ENCODE measurements at regions of chr7 and their contacts with region 1.

Region 1: GRCh38 chr7:131107337-131108211 is 220.1 kb upstream of the MKLN1 start:
- DNase-seq: peak; percentile 82
- H3K4me3 Mint-ChIP-seq: peak overlapping the region; percentile 98
- H3K27ac Mint-ChIP-seq: peak overlapping the region; percentile 97
- H3K4me1 Mint-ChIP-seq: peaks cover 57% of the 10 kb centered on the region
- H3K27me3 Mint-ChIP-seq: peaks cover 2% of the 10 kb centered on the region

Region 2: DNA sequence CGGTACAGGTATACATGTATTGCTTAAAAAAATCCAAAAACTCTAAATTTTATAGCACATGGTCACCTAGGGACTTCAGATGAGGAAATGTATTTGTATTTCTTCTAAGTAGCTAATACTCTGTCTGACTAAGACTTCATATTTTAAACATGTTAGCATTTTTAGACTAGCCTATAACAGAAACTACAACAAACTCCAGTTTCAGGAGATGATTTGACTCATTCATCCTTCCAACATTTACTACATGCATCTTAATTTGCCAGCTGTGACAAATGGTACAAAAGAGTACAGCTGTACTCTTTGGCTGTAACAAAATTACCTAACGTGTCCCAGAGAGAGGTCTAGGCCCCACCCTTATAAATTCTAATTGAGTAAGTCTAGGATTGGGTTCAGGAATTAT is 924.6 kb before region 1 on chr7:
- CTCF ChIA-PET with region 1: no interaction called
- intact Hi-C with region 1: loop called (anchors 5 kb)
- DNase-seq: no peak
- H3K4me3 Mint-ChIP-seq: no peak overlapping the region
- H3K27ac Mint-ChIP-seq: peak overlapping the region; percentile 65
- H3K4me1 Mint-ChIP-seq: peaks cover 30% of the 10 kb centered on the region
- H3K27me3 Mint-ChIP-seq: no peaks in the 10 kb centered on the region

Region 3: GRCh38 chr7:130912862-130913631 is 194.5 kb before region 1 on chr7:
- CTCF ChIA-PET with region 1: no interaction called
- intact Hi-C with region 1: loop called (anchors 1 kb)
- DNase-seq: peak; percentile 92
- H3K4me3 Mint-ChIP-seq: peak overlapping the region; percentile 81
- H3K27ac Mint-ChIP-seq: peak overlapping the region; percentile 97
- H3K4me1 Mint-ChIP-seq: peaks cover 91% of the 10 kb centered on the region
- H3K27me3 Mint-ChIP-seq: no peaks in the 10 kb centered on the region

Region 4: GRCh38 chr7:131057015-131057793 is 50.4 kb before region 1 on chr7:
- CTCF ChIA-PET with region 1: no interaction called
- intact Hi-C with region 1: loop called (anchors 1 kb)
- DNase-seq: peak; percentile 43
- H3K4me3 Mint-ChIP-seq: peak overlapping the region; percentile 66
- H3K27ac Mint-ChIP-seq: peak overlapping the region; percentile 98
- H3K4me1 Mint-ChIP-seq: peaks cover 65% of the 10 kb centered on the region
- H3K27me3 Mint-ChIP-seq: no peaks in the 10 kb centered on the region

Region 5: DNA sequence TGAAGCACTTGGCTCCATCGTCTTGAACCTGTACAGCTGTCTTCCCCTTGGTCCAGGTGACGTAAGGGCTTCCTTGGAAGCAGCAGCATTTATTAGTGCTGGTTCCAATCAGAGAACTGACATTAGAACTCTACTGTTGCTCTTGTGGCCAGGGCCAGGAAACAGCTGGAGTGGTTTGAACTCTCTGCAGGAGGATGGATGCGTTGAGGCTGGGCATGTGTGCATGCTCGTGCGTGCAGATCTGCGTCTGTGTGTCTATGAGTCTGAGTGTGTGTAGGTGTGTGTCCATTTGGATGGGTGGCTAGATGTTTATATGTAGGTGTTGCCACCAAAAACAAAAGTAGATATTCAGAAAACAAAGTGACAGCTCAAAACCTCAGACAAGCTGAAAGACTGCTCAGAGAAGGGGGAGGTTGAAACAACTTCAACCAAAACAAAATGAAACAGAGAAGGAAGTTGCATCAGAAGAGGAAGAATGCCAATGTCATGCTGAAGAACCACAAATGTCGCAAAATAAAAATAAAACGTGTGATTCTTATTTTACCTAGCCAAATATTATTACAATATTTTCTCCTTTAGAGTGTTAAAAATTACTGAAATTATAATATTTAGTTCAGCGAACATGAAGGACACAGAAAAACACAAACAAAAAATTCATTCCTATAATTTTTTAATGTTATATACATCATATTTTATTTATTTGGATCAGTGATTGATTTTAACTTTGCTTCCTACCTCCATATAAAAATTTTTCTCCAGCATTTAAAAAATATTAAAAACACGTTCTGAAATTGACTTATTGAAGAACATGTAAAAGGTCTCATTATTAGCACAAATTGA is 124.0 kb after region 1 on chr7:
- CTCF ChIA-PET with region 1: interaction called, 3 read pairs
- intact Hi-C with region 1: loop called (anchors 1 kb)
- DNase-seq: peak; percentile 80
- H3K4me3 Mint-ChIP-seq: peak overlapping the region; percentile 57
- H3K27ac Mint-ChIP-seq: peak overlapping the region; percentile 86
- H3K4me1 Mint-ChIP-seq: peaks cover 45% of the 10 kb centered on the region
- H3K27me3 Mint-ChIP-seq: no peaks in the 10 kb centered on the region

Region 6: DNA sequence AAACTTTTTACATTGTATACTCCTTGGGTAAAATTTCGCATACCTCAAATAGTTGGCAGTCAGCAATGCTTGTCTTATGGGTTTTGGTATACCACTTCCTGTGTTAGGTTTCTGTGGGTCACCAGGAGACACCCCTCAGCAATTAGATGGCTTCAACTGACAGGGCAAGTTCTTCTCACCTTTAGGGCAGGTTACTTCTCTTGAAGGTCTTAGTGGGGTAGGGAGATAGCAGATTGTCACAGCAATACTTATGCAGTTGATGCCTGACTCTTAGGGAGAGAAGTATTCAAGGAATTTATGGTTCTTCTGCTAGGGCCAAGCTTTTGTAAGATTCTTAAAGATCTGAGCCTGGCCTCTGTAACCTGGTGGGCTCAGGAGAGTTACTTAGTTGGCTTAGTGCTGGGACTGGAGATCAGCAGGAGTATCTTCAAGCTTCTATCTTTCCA is 263.0 kb after region 1 on chr7:
- CTCF ChIA-PET with region 1: no interaction called
- intact Hi-C with region 1: loop called (anchors 1 kb)
- DNase-seq: peak; percentile 15
- H3K4me3 Mint-ChIP-seq: no peak overlapping the region
- H3K27ac Mint-ChIP-seq: no peak overlapping the region
- H3K4me1 Mint-ChIP-seq: peaks cover 66% of the 10 kb centered on the region
- H3K27me3 Mint-ChIP-seq: no peaks in the 10 kb centered on the region